OCI-LY7 (cell line): ENCODE measurements at regions of chr2 and their contacts with region 1.

Region 1: DNA sequence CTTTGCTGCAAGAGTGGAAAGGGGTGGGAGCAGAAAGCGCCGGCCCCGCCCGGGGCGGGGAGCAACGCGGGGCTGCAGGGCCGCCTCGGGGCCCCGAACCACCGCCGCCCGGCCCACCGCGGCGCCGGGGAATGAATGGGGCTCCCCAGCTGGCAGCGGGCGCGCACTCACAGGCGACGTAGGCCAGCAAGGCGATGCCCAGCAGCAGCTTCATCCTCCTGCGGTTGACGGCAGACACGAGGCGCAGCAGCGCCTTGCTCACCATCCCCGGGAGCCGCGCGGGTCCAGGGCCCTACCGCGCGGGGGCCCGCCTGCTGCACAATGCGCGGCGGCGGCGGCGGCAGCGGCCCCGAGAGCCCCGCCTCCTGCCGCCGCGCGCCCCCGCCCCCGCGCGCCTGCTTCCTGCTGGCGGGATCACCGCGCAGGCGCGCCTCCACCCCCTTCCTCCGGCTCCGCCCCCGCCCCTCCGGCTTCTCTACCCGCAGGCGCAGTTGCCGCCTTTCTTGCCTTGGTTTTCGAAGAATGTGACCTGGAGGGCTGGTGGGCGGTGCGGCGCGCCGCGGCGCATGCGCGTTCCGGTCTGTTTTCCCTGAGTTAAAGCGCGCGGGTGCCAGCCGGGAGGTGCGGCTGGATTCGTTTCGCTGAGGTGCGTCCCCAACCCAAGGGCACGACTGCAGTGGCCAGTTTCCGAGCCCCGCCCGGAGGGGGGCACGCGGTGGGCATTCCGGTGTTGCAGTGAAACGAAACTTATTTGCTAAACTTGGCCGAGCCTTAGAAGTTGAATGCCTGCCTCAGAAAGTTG is at the start of gene UXS1:
- DNase-seq: peak; percentile 97
- H3K4me3 ChIP-seq: peak within 1 kb of the TSS; percentile 82
- H3K27ac ChIP-seq: peak within 1 kb of the TSS; percentile 35
- H3K4me1 ChIP-seq: peaks cover 22% of the 10 kb centered on the region
- CTCF ChIP-seq: no peak; the same call in 1 of the 2 replicates
- total RNA-seq, gene UXS1: 21.9 and 23.6 TPM in 2 replicates

Region 2: DNA sequence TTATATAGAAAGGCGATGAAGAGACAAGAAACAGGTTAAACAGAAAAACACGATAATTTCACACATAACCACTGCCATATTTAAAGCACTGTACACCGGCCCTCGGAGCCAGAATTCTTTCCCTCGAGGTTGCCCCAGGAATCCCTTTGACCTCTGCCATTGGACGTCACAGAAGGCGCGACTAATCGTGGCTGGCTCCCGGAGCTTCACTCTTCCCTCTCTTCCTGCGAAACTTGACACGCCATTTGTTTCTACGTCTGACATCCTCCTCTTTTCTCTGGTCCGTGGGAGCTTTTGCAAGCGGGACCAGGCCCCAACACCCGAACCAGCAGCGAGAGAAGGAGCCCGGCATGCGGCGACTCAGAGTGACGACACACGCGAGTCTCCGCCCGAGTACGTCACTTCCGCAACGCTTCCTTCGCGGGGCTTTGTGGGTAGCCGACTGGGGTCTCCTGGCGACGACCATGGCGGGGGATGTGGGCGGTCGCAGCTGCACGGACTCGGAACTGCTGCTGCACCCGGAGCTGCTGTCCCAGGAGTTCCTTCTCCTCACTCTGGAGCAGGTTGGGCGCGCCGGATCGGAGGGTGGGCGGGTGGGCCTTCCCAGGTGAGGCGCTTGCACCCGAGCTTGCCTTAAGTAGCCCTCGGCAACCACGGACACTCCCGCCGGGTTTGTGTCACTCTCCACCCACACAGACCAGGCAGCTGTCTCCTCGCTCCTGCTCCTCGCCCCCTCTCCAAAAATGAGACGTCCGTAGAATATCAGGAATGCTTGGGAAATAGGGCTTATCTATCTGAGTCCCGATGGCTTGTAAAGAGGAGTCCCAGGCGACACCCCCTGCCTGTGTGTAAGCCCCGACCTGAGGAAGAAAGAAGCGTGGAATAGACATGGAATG is 856.8 kb before region 1 on chr2 and contains the start of gene C2orf49:
- CTCF ChIA-PET with region 1: no interaction called
- POLR2A ChIA-PET with region 1: no interaction called
- intact Hi-C with region 1: loop called (anchors 10 kb)
- DNase-seq: peak; percentile 92
- H3K4me3 ChIP-seq: peak within 1 kb of the TSS; percentile 99
- H3K27ac ChIP-seq: peak within 1 kb of the TSS; percentile 74
- H3K4me1 ChIP-seq: peaks cover 25% of the 10 kb centered on the region
- CTCF ChIP-seq: no peak
- total RNA-seq, gene C2orf49: 11.8 and 13.1 TPM in 2 replicates

Region 3: GRCh38 chr2:105827351-105828096 is 366.7 kb before region 1 on chr2:
- CTCF ChIA-PET with region 1: no interaction called
- POLR2A ChIA-PET with region 1: no interaction called
- intact Hi-C with region 1: no loop called
- DNase-seq: peak; percentile 36
- H3K4me3 ChIP-seq: no peak overlapping the region
- H3K27ac ChIP-seq: peak overlapping the region; percentile 27
- H3K4me1 ChIP-seq: peaks cover 20% of the 10 kb centered on the region
- CTCF ChIP-seq: no peak

Region 4: DNA sequence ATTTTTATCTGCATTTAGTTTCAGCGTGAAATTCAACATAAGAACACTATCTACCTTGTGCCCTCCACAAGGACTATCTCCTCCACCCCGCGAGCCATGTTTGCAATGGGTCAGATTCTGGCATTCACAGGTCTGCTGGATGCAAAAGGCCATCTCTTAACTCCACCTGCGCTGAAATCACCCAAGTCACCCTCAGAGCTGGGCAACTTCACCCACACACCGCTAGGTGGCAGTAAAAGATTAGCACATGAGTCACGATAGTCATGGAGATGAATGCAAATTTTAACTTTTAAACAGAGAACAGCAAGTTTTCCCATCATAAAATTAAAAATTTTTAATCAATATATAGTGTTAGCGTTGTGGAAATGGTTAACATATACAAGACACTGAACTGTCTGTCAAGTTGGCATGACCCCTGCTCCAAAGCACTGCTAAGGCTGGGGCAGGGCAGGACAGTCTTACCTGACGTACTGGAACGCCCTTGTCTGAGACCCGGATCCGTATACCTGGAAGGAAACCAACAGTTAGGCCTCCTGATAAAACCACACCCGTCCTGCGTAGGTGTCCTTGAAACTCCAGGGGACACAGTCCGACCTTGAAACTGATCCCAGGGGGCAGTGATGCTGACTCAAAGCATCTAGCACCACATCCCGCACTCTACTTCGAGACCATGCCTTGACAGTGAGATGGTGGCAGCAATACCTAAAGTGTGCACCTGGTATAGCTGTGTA is 89.7 kb before region 1 on chr2:
- CTCF ChIA-PET with region 1: no interaction called
- POLR2A ChIA-PET with region 1: no interaction called
- intact Hi-C with region 1: no loop called
- DNase-seq: peak; percentile 70
- H3K4me3 ChIP-seq: no peak overlapping the region
- H3K27ac ChIP-seq: no peak overlapping the region
- H3K4me1 ChIP-seq: no peaks in the 10 kb centered on the region
- CTCF ChIP-seq: peak; percentile 100